PC-3 (cell line): ENCODE measurements at regions of chr12 and their contacts with region 1.

Region 1: GRCh38 chr12:110698171-110698902 is 9.4 kb upstream of the HVCN1 start:
- DNase-seq: peak; percentile 97
- ATAC-seq: peak; percentile 94
- H3K4me3 ChIP-seq: peak overlapping the region; percentile 12; the same call in 1 of the 2 replicates
- H3K27ac ChIP-seq: peak overlapping the region; percentile 65
- H3K4me1 ChIP-seq: 0 out of 2 replicates have a peak, but pooled peaks cover 6% of the 10 kb centered on the region
- H3K27me3 ChIP-seq: no peaks in the 10 kb centered on the region
- CTCF ChIP-seq: peak; percentile 80

Region 2: GRCh38 chr12:110468212-110469048 is 229.9 kb before region 1 on chr12 and contains the starts of genes FAM216A and GPN3:
- CTCF ChIA-PET with region 1: no interaction called
- POLR2A ChIA-PET with region 1: no interaction called
- intact Hi-C with region 1: loop called (anchors 10 kb)
- DNase-seq: peak; percentile 99
- ATAC-seq: peak; percentile 84
- H3K4me3 ChIP-seq: peak within 1 kb of the TSS; percentile 84
- H3K27ac ChIP-seq: peak within 1 kb of the TSS; percentile 75
- H3K4me1 ChIP-seq: peaks cover 14% of the 10 kb centered on the region
- H3K27me3 ChIP-seq: no peaks in the 10 kb centered on the region
- CTCF ChIP-seq: no peak
- total RNA-seq, gene FAM216A: 19.5 and 27.8 TPM in 2 replicates
- total RNA-seq, gene GPN3: 31.4 and 32.5 TPM in 2 replicates

Region 3: DNA sequence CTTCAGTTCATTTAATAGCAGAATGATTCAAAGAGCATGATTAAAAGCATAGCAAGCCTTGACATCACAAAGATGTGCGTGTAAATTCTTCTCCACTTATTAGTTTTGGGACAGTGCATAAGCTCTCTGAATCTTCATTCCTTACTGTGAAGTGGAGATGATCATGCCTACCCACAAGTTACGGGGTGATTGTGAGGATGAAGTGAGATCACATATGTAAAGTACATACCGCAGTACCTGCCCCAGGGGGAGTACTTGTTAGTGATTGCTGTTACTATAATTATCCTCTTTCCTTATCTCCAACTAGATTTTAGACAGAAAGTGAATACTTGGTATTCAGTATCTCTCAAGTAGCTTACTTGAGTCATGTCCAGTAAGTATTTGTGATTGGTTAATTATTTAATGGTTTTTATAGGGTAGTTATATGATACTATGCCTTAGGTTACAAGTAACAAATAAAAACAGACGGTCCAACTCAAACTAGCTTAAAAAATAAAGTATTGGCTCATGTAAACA is 190.2 kb before region 1 on chr12:
- CTCF ChIA-PET with region 1: no interaction called
- POLR2A ChIA-PET with region 1: no interaction called
- intact Hi-C with region 1: loop called (anchors 1 kb)
- DNase-seq: no peak
- ATAC-seq: no peak
- H3K4me3 ChIP-seq: no peak overlapping the region
- H3K27ac ChIP-seq: no peak overlapping the region
- H3K4me1 ChIP-seq: peaks cover 3% of the 10 kb centered on the region; the same call in 1 of the 2 replicates
- H3K27me3 ChIP-seq: no peaks in the 10 kb centered on the region
- CTCF ChIP-seq: no peak

Region 4: DNA sequence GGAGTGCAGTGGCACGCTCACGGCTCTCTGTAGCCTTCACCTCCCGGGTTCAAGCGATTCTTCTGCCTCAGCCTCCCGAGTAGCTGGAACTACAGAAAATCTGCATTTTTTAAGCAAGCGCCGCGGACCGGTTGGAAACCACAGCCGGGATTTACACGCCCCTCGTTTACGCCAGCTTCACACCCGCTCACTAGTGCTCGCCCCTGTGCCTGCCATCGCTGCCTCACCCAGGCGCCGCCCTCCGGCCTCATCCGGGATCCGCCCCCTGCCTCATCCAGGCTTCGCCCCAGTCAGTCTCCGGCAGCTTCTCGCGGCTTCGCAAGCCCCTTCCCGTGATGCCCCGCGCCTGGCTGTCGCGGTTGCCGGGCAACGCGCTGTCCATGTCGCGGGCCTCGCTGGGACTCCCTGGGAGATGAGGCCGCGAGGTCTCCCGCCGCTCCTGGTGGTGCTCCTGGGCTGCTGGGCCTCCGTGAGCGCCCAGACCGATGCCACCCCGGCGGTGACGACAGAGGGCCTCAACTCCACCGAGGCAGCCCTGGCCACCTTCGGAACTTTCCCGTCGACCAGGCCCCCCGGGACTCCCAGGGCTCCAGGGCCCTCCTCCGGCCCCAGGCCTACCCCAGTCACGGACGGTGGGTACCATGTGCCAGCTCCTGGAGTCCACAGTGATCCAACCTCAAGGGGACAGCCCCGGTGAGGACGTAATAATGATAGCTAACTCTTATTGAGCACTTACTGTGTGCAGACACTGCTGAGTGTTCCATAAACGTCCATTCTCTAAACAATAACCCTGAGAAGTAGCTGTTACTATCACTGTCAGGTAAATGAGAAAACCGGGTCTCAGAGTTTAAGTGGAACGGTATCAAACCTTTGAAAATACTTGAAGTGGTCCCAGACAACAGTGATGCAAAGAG is 84.3 kb before region 1 on chr12 and contains the start of gene TCTN1:
- CTCF ChIA-PET with region 1: no interaction called
- POLR2A ChIA-PET with region 1: no interaction called
- intact Hi-C with region 1: loop called (anchors 2 kb)
- DNase-seq: peak; percentile 97
- ATAC-seq: peak; percentile 99
- H3K4me3 ChIP-seq: peak within 1 kb of the TSS; percentile 75
- H3K27ac ChIP-seq: 0 out of 2 replicates have a peak within 1 kb of the TSS, but pooled peaks have one; percentile 1
- H3K4me1 ChIP-seq: peaks cover 9% of the 10 kb centered on the region
- H3K27me3 ChIP-seq: no peaks in the 10 kb centered on the region
- CTCF ChIP-seq: no peak
- total RNA-seq, gene TCTN1: 40.0 and 40.6 TPM in 2 replicates

Region 5: DNA sequence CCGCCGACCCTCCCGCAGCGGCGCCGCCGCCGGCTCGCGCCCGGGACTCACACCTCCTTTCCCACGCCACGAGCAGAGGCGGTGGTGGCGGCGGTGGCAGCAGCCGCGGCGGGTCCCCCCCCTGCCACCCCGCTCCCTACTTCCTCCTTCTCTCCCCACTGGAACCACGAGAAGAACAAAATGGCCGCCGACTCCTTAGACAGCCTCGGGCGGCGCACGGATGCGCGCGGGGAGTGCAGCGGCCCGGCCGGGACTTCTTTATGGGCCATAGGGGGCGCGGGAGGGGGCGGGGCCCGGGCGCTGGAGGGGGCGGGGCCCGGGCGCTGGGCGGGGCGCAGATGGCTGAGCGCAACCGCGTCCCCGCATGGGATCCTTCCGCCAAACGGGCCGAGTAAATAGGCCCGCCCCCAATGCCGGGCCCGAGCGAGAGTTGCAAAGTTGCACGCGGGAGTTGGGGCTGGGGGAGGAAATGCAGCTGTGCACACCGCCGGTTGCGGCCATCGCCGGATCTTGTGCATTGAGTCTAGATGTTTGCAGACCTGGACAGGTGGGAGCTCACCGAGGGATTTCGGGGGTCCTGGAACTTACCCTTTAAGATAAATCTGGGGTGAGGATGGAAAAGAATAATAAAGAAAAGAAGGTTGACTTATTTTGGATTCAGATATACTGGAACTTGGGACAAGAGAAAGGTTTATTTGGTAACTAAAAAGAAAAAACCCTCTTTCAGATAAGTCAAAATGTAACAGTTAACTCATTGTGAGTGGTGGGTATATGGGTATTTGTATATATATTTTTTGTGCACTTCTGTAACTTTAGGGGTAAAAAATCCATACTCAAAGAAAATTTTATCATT is 44.6 kb after region 1 on chr12 and contains the start of gene PPP1CC:
- CTCF ChIA-PET with region 1: no interaction called
- POLR2A ChIA-PET with region 1: interaction called, 3 read pairs
- intact Hi-C with region 1: loop called (anchors 5 kb)
- DNase-seq: peak; percentile 96
- ATAC-seq: peak; percentile 51
- H3K4me3 ChIP-seq: peak within 1 kb of the TSS; percentile 87
- H3K27ac ChIP-seq: peak within 1 kb of the TSS; percentile 48
- H3K4me1 ChIP-seq: peaks cover 51% of the 10 kb centered on the region
- H3K27me3 ChIP-seq: no peaks in the 10 kb centered on the region
- CTCF ChIP-seq: no peak
- total RNA-seq, gene PPP1CC: 202 and 204 TPM in 2 replicates

Region 6: DNA sequence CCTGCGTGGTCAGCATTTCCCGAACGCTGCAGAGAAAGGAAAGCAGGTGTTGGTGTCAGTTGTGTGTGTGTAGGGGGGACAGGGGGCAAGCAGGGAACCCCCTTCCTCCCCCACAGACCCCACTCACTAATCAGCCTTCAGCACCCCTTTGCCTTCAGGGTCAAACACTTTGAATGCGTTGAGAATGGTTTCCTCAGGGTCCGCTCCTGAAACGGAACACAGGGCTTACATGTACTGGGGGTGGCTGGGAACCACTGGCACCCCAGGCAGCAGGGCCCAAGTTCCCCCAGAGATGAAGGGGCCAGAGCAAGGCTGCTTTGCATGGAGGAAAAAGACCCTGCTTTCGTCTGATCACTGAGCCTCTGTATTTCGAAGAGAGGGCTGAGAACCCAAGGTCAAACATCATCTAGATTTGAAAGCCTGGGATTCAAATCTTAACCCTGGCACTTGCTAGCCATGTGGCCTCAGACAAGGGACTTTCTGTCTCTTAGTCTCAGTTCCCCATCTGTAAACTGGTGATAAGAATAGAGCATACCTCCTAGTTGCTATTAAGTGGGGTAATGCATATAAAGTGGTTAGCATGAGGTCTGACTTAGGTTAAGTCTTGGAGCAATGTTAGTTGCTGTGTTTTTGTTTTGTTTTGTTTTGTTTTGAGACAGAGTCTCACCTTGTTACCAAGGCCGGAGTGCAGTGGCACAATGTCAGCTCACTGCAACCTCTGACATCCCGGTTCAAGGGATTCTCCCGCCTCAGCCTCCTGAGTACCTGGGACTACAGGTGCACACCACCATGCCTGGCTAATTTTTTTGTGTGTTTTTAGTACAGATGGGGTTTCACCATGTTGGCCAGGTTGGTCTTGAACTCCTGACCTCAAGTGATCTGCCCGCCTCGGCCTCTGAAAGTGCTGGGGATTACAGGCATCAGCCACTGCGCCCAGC is 215.1 kb after region 1 on chr12:
- CTCF ChIA-PET with region 1: no interaction called
- POLR2A ChIA-PET with region 1: no interaction called
- intact Hi-C with region 1: no loop called
- DNase-seq: no peak
- ATAC-seq: no peak
- H3K4me3 ChIP-seq: no peak overlapping the region
- H3K27ac ChIP-seq: no peak overlapping the region
- H3K4me1 ChIP-seq: peaks cover 16% of the 10 kb centered on the region
- H3K27me3 ChIP-seq: no peaks in the 10 kb centered on the region
- CTCF ChIP-seq: no peak